Activated CD8-positive, alpha-beta memory T cell treated with anti-CD3 and anti-CD28 coated beads, Interleukin-2, amount 10 ng/mL, durations not matched to agents 7 days and 5 days (primary cell): ENCODE measurements at regions of chr15 and their contacts with region 1.

Region 1: DNA sequence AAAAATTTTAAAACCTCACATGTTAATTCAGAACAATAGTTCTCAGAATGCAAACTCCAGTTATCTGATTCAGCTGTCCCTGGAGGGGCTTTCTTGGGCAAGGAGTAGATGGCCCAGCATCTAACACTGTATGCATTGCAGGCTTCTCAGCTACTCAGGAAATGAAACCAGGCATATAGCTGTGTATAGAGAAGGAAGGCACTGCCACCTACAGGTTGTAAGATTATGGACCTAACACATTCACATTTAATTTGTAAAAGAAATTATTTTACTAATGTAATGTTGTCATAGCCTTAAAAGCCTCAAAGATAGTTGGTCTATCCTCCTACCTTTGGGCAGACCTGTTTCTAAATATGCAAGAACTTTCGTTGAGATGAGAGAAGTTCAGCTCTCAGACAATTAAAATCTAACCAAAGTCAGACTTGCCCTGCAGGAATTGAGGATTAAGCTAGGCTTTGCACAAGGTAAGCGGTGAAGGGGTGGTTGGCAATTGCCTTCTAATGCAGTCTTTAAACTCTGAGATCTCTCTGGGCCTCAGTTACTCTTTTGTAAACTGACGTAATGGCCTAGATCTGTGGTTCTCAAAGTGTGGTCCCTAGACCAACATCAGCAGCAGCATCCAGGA is 132.8 kb upstream of the SLC24A5 start:
- DNase-seq: peak; percentile 44
- ATAC-seq: peak; percentile 77
- H3K4me3 Mint-ChIP-seq: no peak overlapping the region
- H3K27ac Mint-ChIP-seq: no peak overlapping the region
- H3K4me1 Mint-ChIP-seq: peaks cover 13% of the 10 kb centered on the region
- H3K27me3 Mint-ChIP-seq: peaks cover 14% of the 10 kb centered on the region

Region 2: DNA sequence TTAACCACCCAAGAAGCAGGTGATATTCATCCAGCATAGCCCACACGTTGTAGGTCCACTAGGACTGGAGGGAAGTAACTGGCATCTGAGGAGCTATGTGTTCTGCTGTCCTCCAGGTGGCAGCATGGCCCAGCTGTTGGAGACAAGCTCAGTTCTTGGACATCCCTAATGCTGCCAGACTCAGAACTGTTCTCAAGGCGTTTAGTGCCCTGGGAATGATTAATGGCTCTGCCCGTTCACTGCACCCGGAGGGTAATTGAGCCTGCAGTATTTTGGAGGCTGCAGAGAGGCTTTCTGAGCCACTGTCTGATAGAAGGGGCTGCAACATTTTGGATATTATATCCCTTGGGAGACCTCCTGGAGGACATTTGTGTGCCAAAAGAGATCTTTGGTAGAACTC is 792.0 kb before region 1 on chr15:
- CTCF ChIA-PET with region 1: interaction called, 17 read pairs
- DNase-seq: peak; percentile 47
- ATAC-seq: peak; percentile 61
- H3K4me3 Mint-ChIP-seq: no peak overlapping the region
- H3K27ac Mint-ChIP-seq: no peak overlapping the region
- H3K4me1 Mint-ChIP-seq: no peaks in the 10 kb centered on the region
- H3K27me3 Mint-ChIP-seq: no peaks in the 10 kb centered on the region

Region 3: GRCh38 chr15:47711654-47712053 is 276.4 kb before region 1 on chr15:
- CTCF ChIA-PET with region 1: interaction called, 15 read pairs
- DNase-seq: no peak
- ATAC-seq: no peak
- H3K4me3 Mint-ChIP-seq: no peak overlapping the region
- H3K27ac Mint-ChIP-seq: no peak overlapping the region
- H3K4me1 Mint-ChIP-seq: no peaks in the 10 kb centered on the region
- H3K27me3 Mint-ChIP-seq: peaks cover 21% of the 10 kb centered on the region

Region 4: DNA sequence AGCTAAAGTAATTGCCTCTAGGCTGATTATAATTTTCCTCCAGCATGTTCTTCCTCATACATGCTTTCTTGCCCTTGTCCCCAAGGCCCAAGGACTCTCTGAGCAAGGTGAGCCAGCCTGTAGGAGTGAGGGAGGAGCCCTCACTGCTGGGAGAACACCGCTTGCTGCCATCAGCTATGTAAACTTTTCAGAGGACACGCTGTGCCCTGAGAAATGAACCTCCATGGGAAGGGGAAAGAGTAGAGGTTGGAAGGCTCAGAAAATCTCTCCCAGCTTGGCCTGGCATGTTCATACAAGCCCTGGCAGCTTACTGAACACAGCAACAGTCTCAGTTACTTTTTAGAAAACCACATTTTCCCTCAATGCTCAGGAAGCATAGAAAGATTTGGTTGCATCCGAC is 29.7 kb after region 1 on chr15:
- CTCF ChIA-PET with region 1: no interaction called
- DNase-seq: no peak
- ATAC-seq: no peak
- H3K4me3 Mint-ChIP-seq: no peak overlapping the region
- H3K27ac Mint-ChIP-seq: no peak overlapping the region
- H3K4me1 Mint-ChIP-seq: no peaks in the 10 kb centered on the region
- H3K27me3 Mint-ChIP-seq: no peaks in the 10 kb centered on the region